A549 (cell line): ENCODE measurements at regions of chr10 and their contacts with region 1.

Region 1: DNA sequence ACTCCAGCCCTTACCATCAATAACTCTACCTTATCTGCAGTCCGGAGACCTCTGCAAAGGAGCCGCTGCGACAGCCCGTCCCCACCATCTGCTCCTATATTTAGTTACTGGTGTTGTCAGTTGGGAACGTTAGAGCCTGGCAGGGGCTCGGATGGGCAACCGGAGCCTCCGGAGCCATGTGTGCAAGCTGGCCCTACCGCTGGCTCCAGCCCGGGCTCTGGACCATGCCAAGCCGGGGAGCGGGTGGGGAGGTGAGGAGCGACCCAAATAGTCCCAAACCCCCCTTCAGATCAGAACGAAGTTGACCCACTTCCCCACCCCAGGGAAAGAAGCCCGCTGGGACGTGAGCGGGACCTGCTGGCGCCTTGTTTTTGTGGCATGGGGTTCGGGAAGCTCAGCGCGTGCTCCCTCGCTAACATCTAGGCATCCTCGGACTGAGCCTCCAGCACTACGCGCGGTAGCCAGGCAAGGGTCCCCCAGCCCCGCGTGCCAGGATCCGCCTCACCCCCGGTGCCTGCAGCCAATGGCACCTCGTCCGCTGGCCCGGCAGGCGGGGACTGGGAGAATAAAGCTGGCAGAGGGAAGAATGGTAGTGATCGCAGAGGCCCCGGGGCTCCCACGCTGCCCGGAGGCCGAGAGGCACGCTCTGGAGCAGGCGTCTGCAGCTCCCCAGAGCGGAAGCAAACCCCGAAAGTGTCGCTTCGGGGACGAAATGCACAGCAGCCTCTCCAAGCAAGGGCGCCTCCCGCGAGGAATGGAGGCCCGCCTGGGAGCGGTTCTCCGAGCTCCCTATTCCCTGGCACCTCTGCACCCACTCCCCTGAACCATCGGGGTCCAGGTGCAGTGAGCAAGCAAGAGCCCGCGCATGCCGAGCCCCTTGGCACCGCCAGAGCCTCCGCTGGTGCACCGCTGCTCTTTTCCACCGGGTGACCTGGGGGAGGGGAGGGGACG is 679 bp downstream of the LRRC20 start:
- DNase-seq: peak; percentile 25 to 59
- ATAC-seq: peak; percentile 44 to 56
- H3K4me3 ChIP-seq: peak overlapping the region; percentile 72
- H3K27ac ChIP-seq: peak overlapping the region; percentile 80 to 91
- H3K4me1 ChIP-seq: peaks cover 29% of the 10 kb centered on the region
- CTCF ChIP-seq: no peak
- EP300 ChIP-seq: no peak
- POLR2A ChIP-seq: no peak
- RAD21 ChIP-seq: no peak

Region 2: DNA sequence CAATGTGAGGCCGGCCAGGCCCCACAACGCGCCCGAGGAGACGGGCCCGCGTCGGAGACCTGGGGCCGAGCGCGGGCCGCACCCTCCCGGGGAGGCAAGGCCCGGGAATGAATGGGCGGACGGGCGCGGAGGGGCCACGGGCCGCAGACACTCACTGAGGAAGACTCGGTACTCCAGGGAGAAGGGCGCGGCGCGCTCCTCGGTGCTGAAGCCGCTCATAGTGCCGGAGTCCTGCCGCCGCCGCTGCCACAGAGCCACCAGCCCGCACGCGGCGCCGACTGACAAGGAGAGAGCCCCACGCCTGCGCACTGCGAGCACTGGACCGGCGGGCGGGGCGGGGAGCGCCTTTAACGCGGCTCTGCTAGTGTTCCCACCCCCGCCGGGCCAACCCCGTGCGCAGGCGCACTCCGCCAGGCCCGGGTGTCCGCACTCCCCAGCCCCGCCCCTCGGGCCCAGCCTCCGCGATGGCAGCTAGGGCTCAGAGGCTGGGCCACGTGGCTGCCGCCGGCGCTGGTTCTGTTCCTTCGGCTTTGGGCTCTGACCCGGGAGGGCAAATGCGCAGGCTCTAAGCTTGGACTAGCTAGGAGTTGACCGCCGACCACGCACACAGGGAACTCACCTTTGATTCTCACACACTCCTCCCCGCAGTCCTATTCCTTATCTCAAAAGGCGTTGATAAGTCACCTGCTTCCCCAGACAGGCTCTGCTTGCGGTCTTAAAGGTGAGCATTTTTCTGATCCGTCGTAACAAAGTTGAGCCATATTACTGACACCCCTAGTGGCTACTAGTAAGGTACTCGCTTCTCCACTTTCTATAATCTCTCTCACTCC is 148.4 kb before region 1 on chr10 and contains the start of gene PPA1:
- CTCF ChIA-PET with region 1: interaction called, 554 read pairs
- POLR2A ChIA-PET with region 1: interaction called, 4 read pairs
- DNase-seq: peak; percentile 96 to 97
- ATAC-seq: peak; percentile 94 to 97
- H3K4me3 ChIP-seq: peak within 1 kb of the TSS; percentile 91
- H3K27ac ChIP-seq: peak within 1 kb of the TSS; percentile 89 to 90
- H3K4me1 ChIP-seq: peaks cover 26% of the 10 kb centered on the region
- CTCF ChIP-seq: peak; percentile 38
- EP300 ChIP-seq: no peak
- POLR2A ChIP-seq: peak; percentile 80
- RAD21 ChIP-seq: no peak
- polyA plus RNA-seq, gene PPA1: 219 and 273 TPM in 2 replicates

Region 3: GRCh38 chr10:70404036-70404786 is 22.5 kb after region 1 on chr10 and contains the start of gene EIF4EBP2:
- CTCF ChIA-PET with region 1: interaction called, 15 read pairs
- POLR2A ChIA-PET with region 1: interaction called, 9 read pairs
- DNase-seq: peak; percentile 71 to 96
- ATAC-seq: peak; percentile 63 to 87
- H3K4me3 ChIP-seq: peak within 1 kb of the TSS; percentile 58
- H3K27ac ChIP-seq: peak within 1 kb of the TSS; percentile 75 to 92
- H3K4me1 ChIP-seq: peaks cover 15% of the 10 kb centered on the region
- CTCF ChIP-seq: no peak
- EP300 ChIP-seq: no peak
- POLR2A ChIP-seq: peak; percentile 89
- RAD21 ChIP-seq: no peak
- polyA plus RNA-seq, gene EIF4EBP2: 15.4 and 17.7 TPM in 2 replicates